ENCODE measurements at regions of chr2 and their contacts with region 1.

Region 1: GRCh38 chr2:119407430-119408220 is 24.0 kb upstream of the TMEM37 start:
- DNase-seq: peak in 2 of 10 donors; percentile 12 to 46
- H3K4me3 ChIP-seq: no peak overlapping the region
- H3K27ac ChIP-seq: no peak overlapping the region
- H3K27me3 ChIP-seq: peaks cover 0 to 4% (median 0%) of the 10 kb centered on the region in 45 donors
- CTCF ChIP-seq: peak; percentile 70 to 94 (median 84)

Region 2: DNA sequence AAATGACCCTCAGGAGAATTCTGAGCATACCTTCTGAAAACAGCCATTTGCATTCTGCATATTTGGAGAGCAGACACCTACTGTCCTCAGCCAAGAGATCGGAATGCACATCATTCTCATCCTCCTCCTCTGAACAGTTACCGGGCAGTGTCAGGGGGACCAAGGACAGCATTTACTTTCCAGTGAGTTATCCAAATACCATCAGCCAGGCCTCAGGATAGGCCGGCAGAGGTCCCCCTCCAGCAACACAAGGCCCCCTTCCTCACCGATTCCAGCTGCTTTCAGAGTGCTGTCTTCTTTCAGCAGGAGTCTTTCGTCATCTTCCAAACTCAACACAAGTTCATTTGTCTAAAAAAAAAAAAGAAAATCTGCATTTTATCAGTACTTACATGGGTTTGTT is 96.3 kb before region 1 on chr2:
- intact Hi-C with region 1: no loop called
- DNase-seq: no peak
- H3K4me3 ChIP-seq: no peak overlapping the region
- H3K27ac ChIP-seq: no peak overlapping the region
- H3K27me3 ChIP-seq: no peaks in the 10 kb centered on the region
- CTCF ChIP-seq: no peak

Region 3: GRCh38 chr2:119366649-119367471 is 40.8 kb before region 1 on chr2 and contains the starts of genes C2orf76 and DBI:
- intact Hi-C with region 1: loop called in 1 of 2 experiments (anchors 5 kb)
- DNase-seq: peak; percentile 91 to 98 (median 96)
- H3K4me3 ChIP-seq: peak within 1 kb of the TSS; percentile 64 to 99 (median 87)
- H3K27ac ChIP-seq: peak within 1 kb of the TSS; percentile 51 to 97 (median 90)
- H3K27me3 ChIP-seq: no peaks in the 10 kb centered on the region
- CTCF ChIP-seq: peak in 17 of 56 donors; percentile 3 to 41 (median 14)
- total RNA-seq, gene C2orf76: 4.7 to 34.3 (median 14.0) TPM
- total RNA-seq, gene DBI: 70.4 to 282 (median 139) TPM

Region 4: DNA sequence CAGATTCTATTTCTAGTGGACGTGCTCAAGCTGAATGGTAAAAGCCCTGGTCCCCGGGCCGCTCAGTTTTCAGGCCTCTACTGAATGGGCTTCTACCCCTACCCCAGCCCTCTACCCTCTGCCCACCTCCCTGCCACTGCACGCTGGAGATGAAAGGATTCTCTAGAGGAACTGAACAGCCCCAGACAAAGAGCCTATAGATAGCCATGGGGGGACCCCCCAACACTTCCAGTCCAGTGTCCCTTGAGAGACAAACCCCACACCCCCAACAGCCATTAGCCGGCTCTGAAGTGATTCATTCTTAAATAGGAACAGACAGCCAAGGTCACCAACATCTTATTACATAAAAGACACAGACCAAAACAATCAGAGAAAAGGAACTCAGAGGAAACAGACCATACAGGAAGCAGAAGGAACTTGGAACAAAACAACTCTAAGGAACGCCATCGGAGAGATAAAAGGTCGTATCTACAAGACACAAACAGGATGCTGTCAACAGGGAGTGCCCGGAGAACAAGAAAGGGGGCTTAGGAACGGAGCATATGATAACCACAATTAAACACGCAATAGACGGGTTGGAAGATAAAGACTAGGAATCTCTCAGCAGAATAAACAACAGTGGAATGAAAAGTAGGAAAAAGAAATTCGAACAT is 47.6 kb after region 1 on chr2:
- intact Hi-C with region 1: no loop called
- DNase-seq: peak in 1 of 10 donors; percentile 4
- H3K4me3 ChIP-seq: no peak overlapping the region
- H3K27ac ChIP-seq: no peak overlapping the region
- H3K27me3 ChIP-seq: peaks cover 0 to 11% (median 0%) of the 10 kb centered on the region in 45 donors
- CTCF ChIP-seq: no peak

Region 5: DNA sequence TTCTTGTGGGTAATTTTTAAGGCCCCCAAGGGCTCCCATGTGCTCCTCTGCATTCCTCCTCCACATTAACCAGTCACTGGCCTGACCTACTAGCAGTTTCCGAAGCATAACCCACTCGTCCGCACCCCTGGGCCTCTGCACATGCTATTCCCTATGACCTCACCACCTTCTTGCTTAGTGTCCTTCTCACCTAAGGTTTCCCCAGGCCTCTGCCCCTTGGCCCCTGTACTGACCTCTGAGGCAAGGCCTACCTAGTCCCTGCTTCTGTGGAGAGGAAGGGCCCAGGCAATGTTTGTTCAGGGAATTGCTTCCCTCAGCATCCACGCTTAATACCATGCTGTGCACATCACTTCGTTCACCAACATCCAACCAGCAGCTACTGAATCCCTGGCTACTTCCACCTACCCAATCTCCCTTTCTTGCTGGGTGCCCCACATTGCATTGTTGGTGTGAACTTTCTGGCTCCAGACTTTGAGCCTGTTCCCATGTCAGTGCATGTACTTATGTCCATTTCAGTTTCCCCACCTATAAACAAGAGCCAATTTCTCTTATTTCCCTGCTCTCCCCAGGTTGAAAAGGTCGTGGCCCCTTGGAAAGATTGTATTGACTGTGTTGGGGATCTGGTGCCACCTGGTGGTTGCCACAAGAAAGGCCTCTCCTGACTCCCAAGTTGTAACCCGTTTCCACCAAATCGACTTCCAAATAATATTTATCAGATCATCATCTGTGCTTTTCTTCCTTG is 252.1 kb after region 1 on chr2:
- intact Hi-C with region 1: loop called in 1 of 2 experiments (anchors 5 kb)
- DNase-seq: peak in 1 of 10 donors; percentile 51
- H3K4me3 ChIP-seq: no peak overlapping the region
- H3K27ac ChIP-seq: no peak overlapping the region
- H3K27me3 ChIP-seq: no peaks in the 10 kb centered on the region
- CTCF ChIP-seq: peak; percentile 62 to 91 (median 82)

Measured in dorsolateral prefrontal cortex (tissue), 120 donors.